Activated naive CD4-positive, alpha-beta T cell treated with anti-CD3 and anti-CD28 coated beads for 36 hours (primary cell): ENCODE measurements at regions of chr12 and their contacts with region 1.

Region 1: DNA sequence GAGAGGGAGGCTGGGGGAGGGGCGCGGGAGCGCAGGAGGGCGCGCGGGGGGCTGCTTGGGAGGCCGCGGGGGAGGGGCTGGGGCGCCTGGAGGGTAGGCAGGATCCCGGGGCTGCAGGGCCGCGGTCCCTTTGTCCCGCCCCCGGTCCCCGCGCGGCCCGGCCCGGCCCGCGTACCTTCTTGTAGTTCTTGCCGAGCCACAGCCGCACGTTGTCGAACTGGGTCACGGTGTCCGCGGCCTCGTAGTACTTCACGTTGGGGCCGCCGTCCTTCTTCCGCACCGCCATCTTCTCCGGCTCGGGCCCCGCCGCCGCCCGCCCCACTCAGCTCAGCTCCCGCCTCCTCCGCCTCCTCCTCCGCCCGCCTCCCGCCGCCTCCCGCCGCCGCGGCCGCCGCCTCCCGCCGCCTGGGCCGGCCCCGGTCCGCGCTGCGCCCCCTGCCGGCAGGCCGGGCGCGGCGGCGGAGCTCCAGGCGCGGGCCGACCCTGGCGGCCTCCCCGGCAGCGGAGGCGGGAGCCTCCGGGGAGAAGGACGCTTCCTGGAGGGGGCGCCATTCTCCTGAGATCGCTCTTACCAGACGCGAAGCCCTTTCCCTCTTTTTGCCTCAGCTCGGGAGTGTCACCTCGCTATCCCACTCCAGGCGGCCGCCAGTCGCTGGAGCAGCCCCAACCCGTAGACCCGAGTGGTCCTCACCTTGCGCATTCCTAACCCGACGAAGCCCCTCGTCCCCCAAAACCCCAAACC is at the start of gene SMARCC2:
- DNase-seq: peak; percentile 93
- H3K4me3 Mint-ChIP-seq: peak within 1 kb of the TSS; percentile 95
- H3K27ac Mint-ChIP-seq: peak within 1 kb of the TSS; percentile 92
- H3K4me1 Mint-ChIP-seq: peaks cover 33% of the 10 kb centered on the region
- H3K27me3 Mint-ChIP-seq: no peaks in the 10 kb centered on the region
- total RNA-seq, gene SMARCC2: 75.8 to 79.0 TPM

Region 2: DNA sequence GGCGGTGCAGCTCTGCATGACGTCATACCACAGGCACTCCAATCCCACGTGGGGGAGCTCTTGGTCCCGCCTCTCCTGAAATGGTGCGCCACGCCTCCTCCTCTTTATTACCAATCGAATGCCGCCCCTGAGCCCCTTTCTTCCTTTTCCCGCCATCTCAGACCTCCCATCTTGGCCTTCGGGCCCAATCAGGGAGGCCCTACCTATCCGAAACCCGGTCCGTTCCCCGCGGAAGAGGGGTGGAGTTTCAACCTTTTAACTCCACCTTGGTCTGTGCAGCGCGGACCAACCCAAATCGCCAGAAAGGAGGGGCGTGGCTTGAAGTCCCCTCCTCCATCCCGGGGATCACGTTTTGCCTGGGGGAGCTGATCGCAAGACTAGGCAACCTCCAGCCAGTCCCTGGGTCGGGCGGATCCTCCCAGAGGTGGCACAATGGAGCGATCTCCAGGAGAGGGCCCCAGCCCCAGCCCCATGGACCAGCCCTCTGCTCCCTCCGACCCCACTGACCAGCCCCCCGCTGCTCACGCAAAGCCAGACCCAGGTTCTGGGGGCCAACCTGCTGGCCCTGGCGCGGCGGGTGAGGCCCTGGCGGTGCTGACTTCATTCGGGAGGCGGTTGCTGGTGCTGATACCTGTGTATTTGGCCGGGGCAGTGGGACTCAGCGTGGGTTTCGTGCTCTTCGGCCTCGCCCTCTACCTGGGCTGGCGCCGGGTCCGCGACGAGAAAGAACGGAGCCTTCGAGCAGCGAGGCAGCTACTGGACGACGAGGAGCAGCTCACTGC is 61.3 kb before region 1 on chr12 and contains the start of gene ESYT1:
- CTCF ChIA-PET with region 1: interaction called, 86 read pairs
- intact Hi-C with region 1: loop called (anchors 1 kb)
- DNase-seq: peak; percentile 99
- H3K4me3 Mint-ChIP-seq: peak within 1 kb of the TSS; percentile 91
- H3K27ac Mint-ChIP-seq: peak within 1 kb of the TSS; percentile 86
- H3K4me1 Mint-ChIP-seq: peaks cover 55% of the 10 kb centered on the region
- H3K27me3 Mint-ChIP-seq: no peaks in the 10 kb centered on the region
- total RNA-seq, gene ESYT1: 87.4 to 88.9 TPM

Region 3: DNA sequence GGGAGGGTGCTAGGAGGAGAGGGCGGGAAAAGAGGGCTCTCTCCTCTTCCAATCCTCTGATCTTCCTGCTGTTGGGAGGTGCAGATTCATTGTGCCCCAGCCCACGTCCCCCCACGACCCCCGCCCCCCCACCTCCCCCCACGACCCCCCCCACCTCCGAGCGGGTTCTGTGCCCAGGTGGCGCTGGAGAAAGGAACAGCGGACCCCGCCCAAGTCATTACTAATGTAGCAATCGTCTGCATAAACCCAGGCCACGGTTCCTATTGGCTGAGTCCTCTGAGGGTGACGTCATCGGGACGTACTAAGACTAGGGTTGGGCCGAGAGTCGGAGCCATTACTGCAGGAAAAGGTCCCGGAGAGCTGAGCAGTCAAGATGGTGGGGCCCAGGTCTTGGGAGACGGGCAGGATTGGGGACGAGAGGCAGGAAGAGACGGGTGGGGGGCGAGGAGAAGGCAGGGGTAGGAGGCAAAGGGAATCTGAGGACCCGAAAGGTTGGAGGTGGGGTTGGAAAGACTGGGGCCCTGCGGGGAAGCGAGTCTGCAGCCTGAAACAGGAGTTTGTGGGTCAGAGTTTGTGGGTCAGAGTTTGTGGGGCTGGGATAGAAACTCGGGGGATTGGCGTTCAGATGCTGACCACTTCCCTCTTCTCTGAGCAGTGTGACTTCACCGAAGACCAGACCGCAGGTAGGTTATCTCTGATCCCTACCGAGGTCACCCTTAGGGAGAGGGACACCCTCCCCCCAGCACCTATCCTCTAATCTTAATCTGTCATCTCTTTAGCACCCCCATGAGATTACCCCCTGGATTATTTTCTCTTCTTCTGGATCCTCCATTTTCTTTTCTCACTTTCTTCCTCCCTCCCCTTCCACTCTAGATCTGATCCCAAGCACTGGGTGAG is 31.1 kb before region 1 on chr12 and contains the start of gene MYL6:
- CTCF ChIA-PET with region 1: interaction called, 8 read pairs
- intact Hi-C with region 1: loop called (anchors 1 kb)
- DNase-seq: peak; percentile 98
- H3K4me3 Mint-ChIP-seq: peak within 1 kb of the TSS; percentile 96
- H3K27ac Mint-ChIP-seq: peak within 1 kb of the TSS; percentile 95
- H3K4me1 Mint-ChIP-seq: peaks cover 42% of the 10 kb centered on the region
- H3K27me3 Mint-ChIP-seq: no peaks in the 10 kb centered on the region
- total RNA-seq, gene MYL6: 841 to 868 TPM

Region 4: DNA sequence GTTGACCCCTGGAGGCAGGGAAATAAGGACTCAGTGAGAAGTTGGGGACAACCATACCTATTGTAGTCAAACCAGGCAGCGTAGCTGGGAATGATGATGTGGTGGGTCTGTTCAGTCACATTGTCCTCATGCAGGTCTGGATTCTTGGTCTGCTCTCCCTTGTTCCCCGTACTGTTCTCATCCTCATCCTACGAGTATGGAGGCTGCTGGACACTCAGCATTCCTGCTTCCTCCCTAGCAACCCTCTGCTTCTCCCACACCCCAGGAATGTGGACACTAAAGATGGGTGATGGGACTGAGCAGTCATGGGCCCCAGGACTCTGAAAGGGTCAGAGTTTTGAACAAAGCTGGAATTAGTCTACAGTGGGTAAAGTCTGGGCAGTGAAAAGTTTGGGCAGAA is 11.0 kb before region 1 on chr12:
- CTCF ChIA-PET with region 1: interaction called, 11 read pairs
- intact Hi-C with region 1: no loop called
- DNase-seq: no peak
- H3K4me3 Mint-ChIP-seq: no peak overlapping the region
- H3K27ac Mint-ChIP-seq: no peak overlapping the region
- H3K4me1 Mint-ChIP-seq: no peaks in the 10 kb centered on the region
- H3K27me3 Mint-ChIP-seq: no peaks in the 10 kb centered on the region

Region 5: DNA sequence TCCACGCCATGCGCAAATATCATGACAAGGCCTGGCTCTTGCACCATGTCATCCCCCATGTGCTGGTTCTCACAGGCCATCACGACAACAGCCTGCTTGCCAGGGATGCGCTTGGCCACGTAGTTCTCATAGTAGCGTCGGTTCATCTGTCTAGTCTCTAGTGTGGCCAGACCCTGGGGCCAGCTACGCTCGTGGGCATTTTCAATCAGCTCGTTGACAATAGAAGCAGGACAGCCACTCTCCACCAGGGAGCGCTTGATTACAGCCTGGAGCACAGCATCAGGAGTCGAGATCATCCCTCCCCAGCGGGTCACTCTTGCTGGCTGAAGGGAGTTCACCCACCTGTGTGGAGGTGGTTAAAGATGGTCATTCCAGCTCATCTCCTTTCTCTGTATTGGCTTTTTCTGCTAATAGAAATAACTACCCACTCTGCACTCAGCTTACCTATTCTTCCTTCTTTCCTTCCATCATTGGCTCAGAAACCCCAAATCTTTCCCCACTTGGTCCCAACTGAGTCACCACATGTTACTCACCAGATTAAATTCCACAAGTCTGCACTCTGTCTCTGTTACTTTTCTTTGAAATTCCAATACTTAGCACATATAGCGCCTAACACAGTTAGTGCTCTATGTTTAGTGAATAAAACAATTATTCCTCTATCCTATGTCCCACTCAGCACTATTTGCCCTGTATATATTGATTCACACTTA is 17.3 kb after region 1 on chr12:
- CTCF ChIA-PET with region 1: interaction called, 17 read pairs
- intact Hi-C with region 1: no loop called
- DNase-seq: peak; percentile 67
- H3K4me3 Mint-ChIP-seq: no peak overlapping the region
- H3K27ac Mint-ChIP-seq: no peak overlapping the region
- H3K4me1 Mint-ChIP-seq: peaks cover 2% of the 10 kb centered on the region
- H3K27me3 Mint-ChIP-seq: no peaks in the 10 kb centered on the region

Region 6: DNA sequence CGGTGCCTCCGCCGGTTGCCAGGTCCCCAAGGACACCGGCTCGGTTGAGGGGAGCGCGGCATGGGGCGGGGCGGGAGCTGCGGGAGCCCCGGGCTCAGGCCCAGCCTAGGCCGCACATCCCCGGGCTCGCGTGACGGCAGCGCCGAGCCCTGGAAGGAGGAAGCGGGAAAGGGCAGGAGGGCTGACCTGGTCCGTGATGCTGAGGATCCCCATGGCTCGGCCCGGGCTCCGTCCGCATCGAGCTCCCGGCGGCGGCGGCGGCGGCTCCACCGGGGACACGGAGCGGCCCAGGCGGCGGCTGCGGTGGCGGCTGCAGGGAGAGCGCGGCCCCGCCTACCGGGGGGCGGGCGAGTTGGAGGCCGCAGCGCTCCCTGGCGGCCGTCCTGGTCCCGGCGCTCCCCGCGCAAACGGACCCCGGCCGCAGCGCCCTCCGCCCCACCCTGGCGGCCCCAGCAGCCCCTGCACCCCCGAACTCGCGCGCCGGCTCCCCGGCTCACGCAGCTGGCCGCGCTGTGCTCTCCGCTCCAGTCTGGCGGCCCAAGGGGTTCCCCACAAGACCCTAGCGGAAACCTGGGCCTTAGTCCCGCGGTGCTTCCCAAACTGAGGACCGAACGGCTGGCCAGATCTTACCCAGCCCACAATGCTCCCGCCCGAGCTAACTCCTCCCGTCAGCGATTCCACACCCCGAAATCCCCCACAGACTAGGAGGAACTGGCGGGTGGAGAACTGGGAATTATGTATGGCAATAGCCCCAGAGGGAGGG is 68.9 kb after region 1 on chr12 and contains the start of gene ANKRD52:
- CTCF ChIA-PET with region 1: interaction called, 7 read pairs
- intact Hi-C with region 1: loop called (anchors 1 kb)
- DNase-seq: peak; percentile 72
- H3K4me3 Mint-ChIP-seq: peak within 1 kb of the TSS; percentile 83
- H3K27ac Mint-ChIP-seq: peak within 1 kb of the TSS; percentile 59
- H3K4me1 Mint-ChIP-seq: peaks cover 18% of the 10 kb centered on the region
- H3K27me3 Mint-ChIP-seq: no peaks in the 10 kb centered on the region
- total RNA-seq, gene ANKRD52: 23.6 to 25.6 TPM

Region 7: GRCh38 chr12:56266693-56267442 is 77.5 kb after region 1 on chr12 and contains the start of gene COQ10A:
- CTCF ChIA-PET with region 1: interaction called, 20 read pairs
- intact Hi-C with region 1: loop called (anchors 2 kb)
- DNase-seq: peak; percentile 90
- H3K4me3 Mint-ChIP-seq: peak within 1 kb of the TSS; percentile 89
- H3K27ac Mint-ChIP-seq: peak within 1 kb of the TSS; percentile 81
- H3K4me1 Mint-ChIP-seq: peaks cover 16% of the 10 kb centered on the region
- H3K27me3 Mint-ChIP-seq: no peaks in the 10 kb centered on the region
- total RNA-seq, gene COQ10A: 3.5 to 6.1 TPM